Activated CD4-positive, alpha-beta T cell treated with anti-CD3 and anti-CD28 coated beads for 36 hours (primary cell): ENCODE measurements at regions of chr9 and their contacts with region 1.

Region 1: DNA sequence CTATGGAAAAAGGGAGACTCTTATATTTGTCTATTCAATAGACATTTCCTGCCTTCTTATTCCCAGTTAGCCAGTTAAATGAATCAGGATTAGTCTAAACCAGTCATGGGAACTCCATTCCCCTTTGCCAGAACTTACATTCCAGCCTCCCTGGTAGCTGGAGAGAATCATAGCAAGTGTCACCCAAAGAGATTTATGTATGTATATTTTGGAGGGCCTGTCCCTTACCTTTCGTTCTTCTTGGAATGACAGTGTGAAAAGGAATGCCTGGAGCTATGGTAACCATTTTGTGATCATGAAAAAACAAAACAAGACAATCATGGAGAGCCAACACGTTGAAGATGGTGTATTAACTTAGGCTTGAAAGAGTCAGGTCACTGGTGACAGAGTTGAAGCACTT is 627.7 kb downstream of the CCDC171 start:
- DNase-seq: no peak
- ATAC-seq: no peak
- H3K4me3 Mint-ChIP-seq: no peak overlapping the region
- H3K27ac Mint-ChIP-seq: no peak overlapping the region
- H3K4me1 Mint-ChIP-seq: no peaks in the 10 kb centered on the region
- H3K27me3 Mint-ChIP-seq: peaks cover 3% of the 10 kb centered on the region

Region 2: DNA sequence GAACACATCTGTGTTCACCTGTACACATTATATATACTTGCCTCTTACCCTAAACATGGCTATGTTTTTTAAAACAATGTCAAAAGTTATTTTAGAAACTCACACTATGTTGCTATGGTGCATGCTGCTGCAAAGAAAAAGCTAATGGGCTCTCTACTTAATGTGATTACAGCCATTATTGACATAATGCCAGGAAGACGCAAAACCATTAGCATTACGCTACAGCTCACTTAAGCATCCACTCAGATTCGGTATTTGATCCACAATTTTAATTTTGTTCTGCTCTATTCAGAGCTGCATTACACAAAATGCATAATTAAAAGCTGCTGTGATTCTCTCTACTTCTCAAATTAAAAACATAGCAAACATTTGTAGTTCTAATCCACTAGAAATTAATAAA is 294.7 kb after region 1 on chr9:
- CTCF ChIA-PET with region 1: no interaction called
- POLR2A ChIA-PET with region 1: no interaction called
- intact Hi-C with region 1: loop called in 1 of 2 experiments (anchors 10 kb)
- DNase-seq: no peak
- ATAC-seq: no peak
- H3K4me3 Mint-ChIP-seq: no peak overlapping the region
- H3K27ac Mint-ChIP-seq: no peak overlapping the region
- H3K4me1 Mint-ChIP-seq: no peaks in the 10 kb centered on the region
- H3K27me3 Mint-ChIP-seq: no peaks in the 10 kb centered on the region

Region 3: DNA sequence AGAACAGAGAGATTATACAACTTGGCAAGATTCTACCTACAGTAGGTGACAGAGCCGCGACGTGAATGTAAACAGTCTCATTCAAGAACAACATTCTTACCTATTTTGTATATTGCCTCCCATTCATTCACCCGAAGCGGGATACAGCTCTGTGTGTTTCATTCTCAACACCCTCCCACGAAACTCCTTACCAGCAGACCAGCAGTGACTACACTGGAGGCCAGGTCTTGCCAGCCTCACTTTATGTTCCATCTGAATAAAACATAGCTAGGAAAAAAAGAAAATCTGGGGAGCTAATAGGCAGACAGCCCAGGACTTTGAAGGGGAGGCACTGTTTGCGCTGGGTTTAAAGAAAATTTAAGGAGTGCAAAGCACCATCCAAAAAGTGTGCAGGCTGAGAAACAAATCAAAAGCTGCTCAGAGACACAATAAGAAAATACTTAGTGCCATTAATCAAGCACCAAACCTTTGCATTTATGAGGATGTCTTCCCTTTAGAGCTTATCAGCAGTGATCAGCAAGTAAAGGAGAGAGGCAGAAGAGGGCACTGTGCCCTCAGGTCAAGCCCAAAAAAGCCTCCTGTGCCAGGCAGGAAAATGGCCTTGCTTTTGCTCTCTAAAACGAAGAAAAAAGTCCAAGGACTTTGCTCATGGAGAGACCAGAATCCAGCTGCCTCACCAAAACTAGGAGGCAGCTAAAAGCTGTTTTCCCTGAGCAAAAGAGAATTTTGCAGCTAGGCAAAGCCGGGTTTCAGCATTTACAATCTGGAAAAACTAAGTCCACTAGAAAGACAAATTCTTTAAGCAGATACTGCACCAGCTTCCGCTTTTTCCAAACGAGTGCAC is 394.8 kb after region 1 on chr9:
- CTCF ChIA-PET with region 1: no interaction called
- POLR2A ChIA-PET with region 1: no interaction called
- intact Hi-C with region 1: loop called in 1 of 2 experiments (anchors 10 kb)
- DNase-seq: no peak
- ATAC-seq: no peak
- H3K4me3 Mint-ChIP-seq: no peak overlapping the region
- H3K27ac Mint-ChIP-seq: no peak overlapping the region
- H3K4me1 Mint-ChIP-seq: no peaks in the 10 kb centered on the region
- H3K27me3 Mint-ChIP-seq: no peaks in the 10 kb centered on the region